Astrocyte of the cerebellum (primary cell): ENCODE measurements at regions of chr15 and their contacts with region 1.

Region 1: DNA sequence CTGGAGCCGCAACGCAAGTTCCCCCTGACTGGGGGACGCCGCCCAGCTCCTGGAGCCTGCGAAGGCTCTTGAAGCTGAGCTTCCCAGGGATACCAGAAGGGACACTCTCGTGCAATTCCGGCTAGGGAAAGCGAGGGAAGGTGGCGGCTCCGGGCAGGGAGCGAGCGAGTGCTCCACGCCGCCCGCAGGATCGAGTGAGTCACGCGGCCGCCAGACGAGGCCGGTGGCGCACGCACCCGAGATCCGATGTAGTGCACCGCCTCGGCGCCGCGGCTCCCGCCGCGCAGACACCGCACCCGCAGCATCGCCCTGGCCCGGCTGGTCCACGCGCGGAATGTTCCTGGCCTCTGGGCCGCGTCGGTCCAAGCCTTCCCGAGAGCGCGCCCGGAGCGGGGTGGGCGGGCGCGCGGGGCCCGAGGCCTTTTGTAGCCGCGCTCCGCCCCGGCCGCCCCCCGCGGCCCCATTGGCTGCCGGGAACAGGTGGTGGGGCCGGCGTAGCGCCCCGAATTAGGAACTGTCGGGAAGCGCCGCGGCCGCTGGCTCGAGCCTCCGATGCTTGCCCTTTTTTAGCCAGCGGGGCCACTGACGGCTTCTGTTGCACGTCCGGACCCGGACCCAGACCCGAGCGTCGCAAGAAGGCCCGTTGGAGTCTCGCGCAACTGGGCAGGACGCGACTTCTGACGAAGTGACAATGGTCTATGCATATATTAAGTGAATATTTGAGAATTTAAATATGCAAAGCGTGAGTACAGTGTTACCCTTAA is at the start of gene GATM:
- DNase-seq: peak; percentile 65
- H3K4me3 ChIP-seq: peak within 1 kb of the TSS; percentile 43
- CTCF ChIP-seq: peak; percentile 62

Region 2: GRCh38 chr15:45200001-45200798 is 178.1 kb before region 1 on chr15:
- in situ Hi-C with region 1: loop called (anchors 5 kb)
- DNase-seq: peak; percentile 77
- H3K4me3 ChIP-seq: peak overlapping the region; percentile 64
- CTCF ChIP-seq: no peak

Region 3: GRCh38 chr15:45314960-45315359 is 63.4 kb before region 1 on chr15:
- in situ Hi-C with region 1: no loop called
- DNase-seq: no peak
- H3K4me3 ChIP-seq: no peak overlapping the region
- CTCF ChIP-seq: no peak